Activated CD4-positive, alpha-beta T cell treated with anti-CD3 and anti-CD28 coated beads, Interleukin-2, amount 10 ng/mL, durations not matched to agents 24 days and 14 days (primary cell): ENCODE measurements at regions of chr13 and their contacts with region 1.

Region 1: GRCh38 chr13:35157143-35157755 is 215.2 kb downstream of the NBEA start:
- DNase-seq: peak; percentile 78
- H3K4me3 Mint-ChIP-seq: no peak overlapping the region
- H3K27ac Mint-ChIP-seq: no peak overlapping the region
- H3K4me1 Mint-ChIP-seq: peaks cover 10% of the 10 kb centered on the region
- H3K27me3 Mint-ChIP-seq: no peaks in the 10 kb centered on the region

Region 2: DNA sequence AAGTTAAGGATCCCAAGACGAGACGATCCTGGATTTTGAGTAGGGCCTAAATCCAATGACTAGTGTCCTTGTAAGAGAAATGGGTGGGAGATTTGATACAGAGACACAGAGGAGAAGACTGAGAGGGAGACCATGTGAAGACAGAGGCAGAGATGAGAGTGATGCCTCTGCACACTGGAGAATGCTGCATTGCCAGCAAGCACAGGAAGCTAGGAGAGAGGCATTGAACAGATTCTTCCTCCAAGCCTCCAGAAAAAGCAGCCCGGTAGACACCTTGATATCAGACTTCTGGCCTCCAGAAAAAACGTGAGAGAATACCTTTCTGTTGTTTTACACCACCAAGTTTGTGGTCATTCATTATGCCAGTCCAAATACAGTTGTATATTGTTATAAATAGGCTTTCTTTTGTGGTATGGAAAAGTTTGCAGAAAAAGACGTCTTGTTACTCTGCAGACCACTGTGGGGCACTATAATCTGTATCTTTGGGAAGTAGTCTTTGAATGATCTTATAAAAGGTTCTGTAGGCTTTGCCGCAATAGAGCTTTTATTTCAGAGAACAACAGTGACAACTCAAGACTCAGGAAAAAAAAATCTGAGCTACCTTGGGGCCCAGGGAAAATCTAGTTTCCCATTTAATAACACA is 1357.2 kb before region 1 on chr13:
- intact Hi-C with region 1: loop called (anchors 5 kb)
- DNase-seq: no peak
- H3K4me3 Mint-ChIP-seq: no peak overlapping the region
- H3K27ac Mint-ChIP-seq: no peak overlapping the region
- H3K4me1 Mint-ChIP-seq: peaks cover 2% of the 10 kb centered on the region
- H3K27me3 Mint-ChIP-seq: peaks cover 11% of the 10 kb centered on the region

Region 3: DNA sequence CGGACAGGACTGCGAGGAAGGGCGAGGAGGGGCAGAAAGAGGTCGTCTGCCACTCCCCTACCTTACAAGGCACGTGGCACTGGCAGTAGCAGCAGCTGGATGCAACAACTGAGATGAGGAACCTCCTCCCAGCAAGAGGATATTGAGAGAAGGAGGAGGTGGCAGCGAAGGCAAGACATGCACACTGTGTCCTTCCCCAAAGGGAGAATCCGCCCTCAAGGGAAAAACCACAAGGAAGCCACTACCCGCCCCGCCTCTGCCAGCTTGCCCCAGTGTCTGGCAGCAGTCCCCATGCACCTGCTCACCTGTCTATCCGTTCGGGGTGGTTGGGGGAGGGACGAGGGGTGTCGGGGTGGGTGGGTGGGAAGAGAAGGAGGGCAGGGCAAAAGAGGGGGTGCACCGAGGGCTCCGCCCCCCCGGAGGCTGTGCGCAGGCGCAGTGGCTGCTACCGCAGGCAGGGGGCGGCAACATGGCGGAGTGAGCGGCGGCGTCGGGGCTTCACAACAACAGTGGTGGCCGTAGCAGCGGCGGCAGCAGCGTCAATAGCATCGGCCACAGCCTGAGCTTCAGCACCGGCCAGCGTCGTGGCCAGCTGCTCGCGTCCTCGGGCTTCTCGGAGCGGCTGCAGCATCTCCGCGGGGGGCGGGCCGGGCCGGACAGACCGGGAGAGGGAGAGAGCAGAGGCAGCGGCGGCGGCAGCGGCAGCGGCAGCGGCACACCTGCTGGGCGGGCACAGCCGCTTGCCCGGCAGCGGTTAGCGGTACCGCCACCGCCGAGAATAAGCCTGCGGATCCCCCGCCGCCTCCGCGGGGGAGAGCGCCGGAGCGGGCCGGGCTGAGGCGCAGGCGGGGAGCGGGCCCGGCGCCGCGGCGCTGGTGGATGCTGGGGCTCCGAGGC is 215.2 kb before region 1 on chr13 and contains the start of gene NBEA:
- intact Hi-C with region 1: loop called (anchors 5 kb)
- DNase-seq: peak; percentile 92
- H3K4me3 Mint-ChIP-seq: peak within 1 kb of the TSS; percentile 91
- H3K27ac Mint-ChIP-seq: peak within 1 kb of the TSS; percentile 67
- H3K4me1 Mint-ChIP-seq: peaks cover 14% of the 10 kb centered on the region
- H3K27me3 Mint-ChIP-seq: peaks cover 48% of the 10 kb centered on the region
- total RNA-seq, gene NBEA: 0.07 and 0.14 TPM in 2 replicates

Region 4: GRCh38 chr13:35255241-35255640 is 98.0 kb after region 1 on chr13:
- intact Hi-C with region 1: no loop called
- DNase-seq: no peak
- H3K4me3 Mint-ChIP-seq: no peak overlapping the region
- H3K27ac Mint-ChIP-seq: no peak overlapping the region
- H3K4me1 Mint-ChIP-seq: peaks cover 2% of the 10 kb centered on the region
- H3K27me3 Mint-ChIP-seq: no peaks in the 10 kb centered on the region